ENCODE measurements at regions of chr10 and their contacts with region 1.

Region 1: GRCh38 chr10:30059209-30060107 is at the start of gene JCAD:
- DNase-seq: peak; percentile 46
- ATAC-seq: peak; percentile 82
- H3K4me3 ChIP-seq: peak within 1 kb of the TSS; percentile 77
- H3K27ac ChIP-seq: no peak within 1 kb of the TSS
- H3K4me1 ChIP-seq: peaks cover 40% of the 10 kb centered on the region
- H3K27me3 ChIP-seq: no peaks in the 10 kb centered on the region
- CTCF ChIP-seq: no peak
- total RNA-seq, gene JCAD: 5.0 and 7.8 TPM in 2 replicates

Region 2: GRCh38 chr10:30002104-30002950 is 57.1 kb before region 1 on chr10:
- CTCF ChIA-PET with region 1: no interaction called
- POLR2A ChIA-PET with region 1: no interaction called
- intact Hi-C with region 1: no loop called
- DNase-seq: peak; percentile 81
- ATAC-seq: peak; percentile 84
- H3K4me3 ChIP-seq: no peak overlapping the region
- H3K27ac ChIP-seq: no peak overlapping the region
- H3K4me1 ChIP-seq: peaks cover 7% of the 10 kb centered on the region
- H3K27me3 ChIP-seq: no peaks in the 10 kb centered on the region
- CTCF ChIP-seq: peak; percentile 81

Region 3: GRCh38 chr10:30098613-30099012 is 39.2 kb after region 1 on chr10:
- CTCF ChIA-PET with region 1: no interaction called
- POLR2A ChIA-PET with region 1: no interaction called
- intact Hi-C with region 1: loop called (anchors 5 kb)
- DNase-seq: peak; percentile 93
- ATAC-seq: peak; percentile 87
- H3K4me3 ChIP-seq: peak overlapping the region; percentile 44; the same call in 1 of the 2 replicates
- H3K27ac ChIP-seq: peak overlapping the region; percentile 89
- H3K4me1 ChIP-seq: peaks cover 30% of the 10 kb centered on the region
- H3K27me3 ChIP-seq: no peaks in the 10 kb centered on the region
- CTCF ChIP-seq: no peak